ENCODE measurements at regions of chr13 and their contacts with region 1.

Region 1: DNA sequence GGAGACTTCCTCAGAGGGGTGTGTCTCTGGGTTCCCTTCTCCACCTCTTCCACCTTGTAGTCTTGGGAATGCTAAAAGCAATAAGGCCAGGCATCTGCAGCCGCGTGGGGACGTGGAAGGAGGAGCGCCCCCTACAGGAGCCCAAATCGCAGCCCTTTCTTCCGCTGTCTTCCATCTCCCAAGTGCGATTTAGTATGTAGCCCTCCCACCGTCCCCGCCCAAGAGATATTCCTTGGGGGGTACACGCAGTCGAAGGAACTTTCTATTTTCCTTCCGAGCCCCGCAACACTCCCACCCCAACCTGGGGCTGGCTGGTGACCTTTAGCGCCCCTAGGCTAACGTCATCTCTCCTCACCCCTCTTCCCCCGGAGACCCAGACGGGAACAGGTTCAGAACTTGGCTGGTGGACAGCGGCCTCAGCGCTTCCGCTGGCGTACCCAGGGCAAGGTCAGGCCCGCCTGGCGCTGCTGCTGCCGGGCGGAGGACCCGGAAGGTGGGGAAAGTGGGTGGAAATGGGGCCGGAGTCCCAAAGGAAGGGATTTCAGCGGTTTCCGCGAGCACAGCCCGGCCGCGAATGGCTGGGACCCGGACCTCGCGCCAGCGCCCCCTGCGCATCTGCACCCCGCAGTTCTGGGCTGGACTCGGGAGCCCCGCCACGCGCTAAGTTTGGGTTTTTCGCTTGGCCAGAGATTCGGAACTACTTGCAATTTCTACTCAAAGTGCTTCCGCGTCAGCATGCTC is 2.1 kb upstream of the PCDH8 start:
- DNase-seq: peak; percentile 76
- ATAC-seq: peak; percentile 67
- H3K4me3 Mint-ChIP-seq: peak overlapping the region; percentile 56
- H3K27ac Mint-ChIP-seq: no peak overlapping the region
- H3K4me1 Mint-ChIP-seq: peaks cover 22% of the 10 kb centered on the region
- H3K27me3 Mint-ChIP-seq: peaks cover 66% of the 10 kb centered on the region

Region 2: GRCh38 chr13:52743988-52744387 is 106.6 kb before region 1 on chr13:
- CTCF ChIA-PET with region 1: no interaction called
- POLR2A ChIA-PET with region 1: no interaction called
- intact Hi-C with region 1: loop called in 1 of 2 experiments (anchors 5 kb)
- DNase-seq: no peak
- ATAC-seq: no peak
- H3K4me3 Mint-ChIP-seq: no peak overlapping the region
- H3K27ac Mint-ChIP-seq: no peak overlapping the region
- H3K4me1 Mint-ChIP-seq: peaks cover 2% of the 10 kb centered on the region
- H3K27me3 Mint-ChIP-seq: peaks cover 45% of the 10 kb centered on the region

Region 3: DNA sequence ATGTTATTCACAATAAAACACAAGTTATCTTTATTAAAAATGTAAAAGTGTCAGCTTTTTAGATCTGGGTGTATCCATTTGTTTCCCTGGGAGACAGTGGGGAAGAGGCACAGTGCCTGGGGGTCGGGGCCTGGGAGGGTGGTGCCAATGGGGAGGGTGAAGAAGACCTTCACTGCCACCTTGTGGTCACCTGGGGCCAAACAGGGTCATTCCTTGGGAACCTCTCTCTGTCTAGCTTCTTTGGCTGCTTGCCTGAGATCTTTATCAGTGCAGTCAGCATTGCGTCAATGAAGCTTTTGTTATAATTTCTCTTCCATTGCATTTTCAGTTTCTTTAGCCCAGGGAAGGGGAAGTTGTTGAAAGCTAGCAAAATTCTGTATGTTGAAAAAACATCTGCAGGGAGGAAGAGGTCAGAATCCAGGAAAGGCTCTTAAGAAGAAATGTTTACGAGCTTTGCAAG is 41.2 kb before region 1 on chr13:
- CTCF ChIA-PET with region 1: no interaction called
- POLR2A ChIA-PET with region 1: no interaction called
- intact Hi-C with region 1: loop called in 1 of 2 experiments (anchors 1 kb)
- DNase-seq: peak; percentile 74
- ATAC-seq: peak; percentile 78
- H3K4me3 Mint-ChIP-seq: no peak overlapping the region
- H3K27ac Mint-ChIP-seq: no peak overlapping the region
- H3K4me1 Mint-ChIP-seq: peaks cover 4% of the 10 kb centered on the region
- H3K27me3 Mint-ChIP-seq: peaks cover 18% of the 10 kb centered on the region

Region 4: GRCh38 chr13:52870827-52871226 is 20.3 kb after region 1 on chr13:
- CTCF ChIA-PET with region 1: no interaction called
- POLR2A ChIA-PET with region 1: no interaction called
- intact Hi-C with region 1: no loop called
- DNase-seq: no peak
- ATAC-seq: no peak
- H3K4me3 Mint-ChIP-seq: no peak overlapping the region
- H3K27ac Mint-ChIP-seq: no peak overlapping the region
- H3K4me1 Mint-ChIP-seq: no peaks in the 10 kb centered on the region
- H3K27me3 Mint-ChIP-seq: peaks cover 9% of the 10 kb centered on the region

Region 5: DNA sequence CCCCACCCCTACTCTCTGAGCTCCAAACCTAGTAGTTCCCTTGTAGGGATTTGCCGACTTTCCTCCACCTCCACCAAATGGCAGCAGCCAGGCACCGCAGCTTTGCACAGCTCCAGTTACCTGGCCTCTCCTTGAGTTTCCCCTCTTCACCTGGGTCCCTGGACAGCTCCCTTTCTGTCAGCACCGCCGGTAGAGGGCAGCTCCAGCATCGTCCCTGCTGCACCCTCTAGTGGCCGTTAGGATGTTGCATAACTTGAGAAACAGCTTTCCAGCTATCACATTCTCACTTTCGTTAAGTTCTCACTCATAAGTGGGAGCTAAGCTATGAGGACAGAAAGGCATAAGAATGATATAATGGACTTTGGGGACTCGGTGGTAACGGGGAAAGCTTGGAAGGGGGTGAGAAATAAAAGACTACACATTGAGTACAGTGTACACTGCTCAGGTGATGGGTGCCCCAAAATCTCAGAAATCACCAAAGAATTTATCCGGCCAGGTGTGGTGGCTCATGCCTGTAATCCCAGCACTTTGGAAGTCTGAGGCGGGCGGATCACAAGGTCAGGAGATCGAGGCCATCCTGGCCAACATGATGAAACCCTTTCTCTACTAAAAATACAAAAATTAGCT is 117.6 kb after region 1 on chr13:
- CTCF ChIA-PET with region 1: interaction called, 5 read pairs
- POLR2A ChIA-PET with region 1: no interaction called
- intact Hi-C with region 1: loop called in 1 of 2 experiments (anchors 5 kb)
- DNase-seq: peak; percentile 80
- ATAC-seq: peak; percentile 79
- H3K4me3 Mint-ChIP-seq: no peak overlapping the region
- H3K27ac Mint-ChIP-seq: no peak overlapping the region
- H3K4me1 Mint-ChIP-seq: no peaks in the 10 kb centered on the region
- H3K27me3 Mint-ChIP-seq: peaks cover 7% of the 10 kb centered on the region

Region 6: GRCh38 chr13:53151336-53152056 is 300.9 kb after region 1 on chr13:
- CTCF ChIA-PET with region 1: no interaction called
- POLR2A ChIA-PET with region 1: no interaction called
- intact Hi-C with region 1: loop called in 1 of 2 experiments (anchors 5 kb)
- DNase-seq: peak; percentile 61
- ATAC-seq: peak; percentile 97
- H3K4me3 Mint-ChIP-seq: no peak overlapping the region
- H3K27ac Mint-ChIP-seq: no peak overlapping the region
- H3K4me1 Mint-ChIP-seq: peaks cover 3% of the 10 kb centered on the region
- H3K27me3 Mint-ChIP-seq: peaks cover 6% of the 10 kb centered on the region

Region 7: GRCh38 chr13:53200498-53201453 is 350.2 kb after region 1 on chr13:
- CTCF ChIA-PET with region 1: no interaction called
- POLR2A ChIA-PET with region 1: no interaction called
- intact Hi-C with region 1: loop called in 1 of 2 experiments (anchors 2 kb)
- DNase-seq: peak; percentile 55
- ATAC-seq: no peak
- H3K4me3 Mint-ChIP-seq: no peak overlapping the region
- H3K27ac Mint-ChIP-seq: no peak overlapping the region
- H3K4me1 Mint-ChIP-seq: no peaks in the 10 kb centered on the region
- H3K27me3 Mint-ChIP-seq: peaks cover 15% of the 10 kb centered on the region

Measured in activated CD4-positive, alpha-beta T cell treated with anti-CD3 and anti-CD28 coated beads for 36 hours (primary cell).